Activated T-helper 2 cell treated with anti-CD3 and anti-CD28 coated beads, Interferon-gamma antibody, Interleukin-2, Interleukin-4, amounts not matched to agents 10 μg/mL and 5 μg/mL and 100 μg/mL, durations not matched to agents 14 hours and 24 hours and 36 hours (primary cell): ENCODE measurements at regions of chr9 and their contacts with region 1.

Region 1: DNA sequence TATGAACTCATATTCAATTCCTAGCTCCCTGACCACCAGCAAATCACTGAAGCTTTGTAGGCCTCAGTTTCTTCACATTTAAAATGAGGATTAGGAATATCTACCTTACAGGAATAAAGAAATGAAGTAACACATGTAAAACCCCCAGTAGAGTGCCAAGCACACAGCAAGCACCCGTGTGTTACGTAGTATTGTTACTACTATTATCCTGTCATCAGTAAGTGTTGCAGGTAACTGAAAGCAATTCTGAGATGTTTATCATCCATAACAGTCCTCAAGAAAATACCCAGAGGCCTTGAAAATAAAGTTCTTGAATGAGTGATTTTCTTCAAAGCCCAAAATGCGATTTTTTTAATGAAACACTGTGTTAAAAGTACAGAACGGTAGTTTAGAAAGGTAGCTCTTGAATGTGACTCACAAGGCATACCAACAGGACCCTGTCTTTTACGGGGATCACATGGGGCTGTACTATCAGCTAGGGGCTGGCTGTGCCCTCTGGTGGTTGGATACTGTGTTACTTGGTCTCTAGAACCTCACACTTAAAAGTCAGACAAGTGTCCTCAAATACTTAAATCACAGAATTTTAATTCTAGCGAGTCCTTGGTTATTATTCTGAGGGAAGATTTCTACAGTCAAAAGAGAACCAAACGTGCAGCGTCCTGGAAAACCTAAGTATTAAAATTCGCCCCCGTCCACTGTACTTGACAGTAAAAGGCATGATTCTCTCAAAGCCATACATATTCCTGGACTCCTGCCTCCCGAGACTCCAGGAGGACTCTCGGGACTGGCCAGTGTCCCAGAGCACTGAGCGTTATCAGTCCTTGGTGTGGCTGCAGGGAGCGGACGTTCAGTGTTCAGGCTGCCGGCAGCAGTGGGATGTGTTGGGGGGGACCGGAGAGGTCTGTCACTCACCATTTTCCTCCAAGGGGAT is 725 bp downstream of the NDUFB6 start:
- DNase-seq: peak; percentile 64
- H3K4me3 Mint-ChIP-seq: peak overlapping the region; percentile 97
- H3K27ac Mint-ChIP-seq: peak overlapping the region; percentile 97
- H3K4me1 Mint-ChIP-seq: peaks cover 23% of the 10 kb centered on the region
- H3K27me3 Mint-ChIP-seq: peaks cover 4% of the 10 kb centered on the region

Region 2: GRCh38 chr9:32247168-32247567 is 325.1 kb before region 1 on chr9:
- intact Hi-C with region 1: no loop called
- DNase-seq: no peak
- H3K4me3 Mint-ChIP-seq: no peak overlapping the region
- H3K27ac Mint-ChIP-seq: no peak overlapping the region
- H3K4me1 Mint-ChIP-seq: no peaks in the 10 kb centered on the region
- H3K27me3 Mint-ChIP-seq: no peaks in the 10 kb centered on the region

Region 3: DNA sequence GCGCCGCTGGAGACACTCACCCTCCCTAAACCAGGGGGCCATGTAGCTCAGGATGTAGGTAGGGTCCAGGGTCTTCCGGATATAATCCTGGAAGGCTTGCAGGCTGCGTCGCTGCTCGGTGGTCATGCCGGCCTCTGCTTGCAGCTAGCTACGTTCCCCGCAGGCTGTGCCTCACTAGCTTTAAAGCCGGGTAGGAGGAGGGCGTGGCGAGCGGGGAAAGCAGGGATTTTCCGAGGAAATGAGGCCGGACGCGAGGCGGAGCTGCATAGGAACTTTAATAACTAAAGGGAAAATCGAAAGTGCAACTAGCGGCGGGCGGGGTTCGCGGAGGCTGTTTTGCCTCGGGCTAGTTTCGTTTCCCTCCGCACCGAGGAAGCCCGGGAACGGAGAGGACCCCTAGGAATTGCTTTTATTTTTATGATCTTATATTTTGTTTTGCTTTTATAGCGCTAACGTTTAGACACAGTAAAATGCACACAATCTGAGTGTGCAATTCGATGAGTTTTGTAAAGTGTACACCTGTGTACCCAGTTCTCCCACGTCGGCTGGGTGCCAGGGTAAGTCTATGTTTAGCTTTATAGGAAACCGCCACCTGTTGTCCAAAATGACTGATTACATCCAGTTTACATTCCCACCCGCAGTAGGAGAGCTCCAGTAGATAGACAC is 46.1 kb before region 1 on chr9 and contains the start of gene RIGI:
- intact Hi-C with region 1: loop called (anchors 1 kb)
- DNase-seq: peak; percentile 73
- H3K4me3 Mint-ChIP-seq: peak within 1 kb of the TSS; percentile 89
- H3K27ac Mint-ChIP-seq: peak within 1 kb of the TSS; percentile 76
- H3K4me1 Mint-ChIP-seq: peaks cover 31% of the 10 kb centered on the region
- H3K27me3 Mint-ChIP-seq: no peaks in the 10 kb centered on the region
- total RNA-seq, gene RIGI: 4.8 and 5.0 TPM in 2 replicates

Region 4: GRCh38 chr9:32603914-32604741 is 31.9 kb after region 1 on chr9:
- intact Hi-C with region 1: no loop called
- DNase-seq: no peak
- H3K4me3 Mint-ChIP-seq: no peak overlapping the region
- H3K27ac Mint-ChIP-seq: no peak overlapping the region
- H3K4me1 Mint-ChIP-seq: peaks cover 3% of the 10 kb centered on the region
- H3K27me3 Mint-ChIP-seq: peaks cover 12% of the 10 kb centered on the region